ENCODE measurements at regions of chr10 and their contacts with region 1.

Region 1: DNA sequence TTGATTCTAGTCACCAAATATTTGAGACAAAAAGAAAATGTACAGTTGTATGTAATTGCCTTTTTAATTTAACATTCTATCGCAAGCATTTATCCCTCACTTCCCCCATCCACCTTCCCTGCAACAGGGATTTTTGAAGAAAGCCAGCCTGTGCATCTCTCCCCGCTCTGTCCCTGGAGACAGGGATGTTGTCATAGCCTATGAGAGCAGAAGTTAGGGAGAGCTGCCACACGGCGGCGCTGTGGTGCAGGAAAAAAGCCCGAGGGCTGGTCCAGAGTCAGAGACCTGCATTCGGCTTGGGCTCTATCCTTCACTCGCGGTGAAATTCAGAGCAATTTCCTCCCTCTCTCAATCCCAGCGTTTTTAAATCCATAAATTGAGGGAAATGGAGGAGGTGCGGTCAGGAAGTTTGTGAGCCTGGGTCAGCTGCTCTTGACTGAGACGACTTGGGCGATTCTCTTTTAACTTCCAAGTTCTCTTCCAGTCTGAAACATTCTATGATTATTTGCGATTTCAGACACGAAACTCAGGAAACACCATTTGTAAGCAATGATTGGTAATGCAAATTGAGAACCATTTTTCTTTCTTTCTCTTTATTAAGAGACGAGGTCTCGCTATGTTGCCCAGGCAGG is 17.5 kb downstream of the HKDC1 start:
- DNase-seq: peak; percentile 78
- H3K4me3 Mint-ChIP-seq: no peak overlapping the region
- H3K27ac Mint-ChIP-seq: no peak overlapping the region
- H3K4me1 Mint-ChIP-seq: peaks cover 15% of the 10 kb centered on the region
- H3K27me3 Mint-ChIP-seq: peaks cover 2% of the 10 kb centered on the region

Region 2: GRCh38 chr10:69101451-69102095 is 136.1 kb before region 1 on chr10:
- intact Hi-C with region 1: no loop called
- DNase-seq: no peak
- H3K4me3 Mint-ChIP-seq: peak overlapping the region; percentile 23
- H3K27ac Mint-ChIP-seq: peak overlapping the region; percentile 40
- H3K4me1 Mint-ChIP-seq: peaks cover 31% of the 10 kb centered on the region
- H3K27me3 Mint-ChIP-seq: no peaks in the 10 kb centered on the region

Region 3: DNA sequence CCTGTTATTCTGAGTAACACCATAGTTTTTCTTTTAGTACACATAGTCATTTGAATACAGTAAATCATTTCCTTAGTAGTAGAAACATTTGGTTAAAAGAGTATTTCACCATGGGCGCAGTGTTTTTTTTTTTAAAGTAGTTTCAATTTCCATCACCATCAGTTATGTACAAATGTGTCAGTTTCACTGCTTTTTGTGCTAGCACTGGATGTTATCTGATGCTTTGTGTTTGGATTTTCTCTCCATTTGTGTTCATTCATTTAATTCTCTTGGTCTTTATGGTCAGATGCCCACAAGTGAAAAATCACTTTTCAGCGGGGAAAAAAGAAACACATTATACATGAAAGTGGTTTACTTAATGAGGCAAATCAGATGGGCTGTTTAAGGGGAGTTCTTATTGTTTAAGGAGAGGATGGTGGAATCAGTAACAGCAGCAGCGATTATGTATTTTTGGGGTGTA is 24.7 kb after region 1 on chr10:
- intact Hi-C with region 1: loop called (anchors 1 kb)
- DNase-seq: no peak
- H3K4me3 Mint-ChIP-seq: peak overlapping the region; percentile 3
- H3K27ac Mint-ChIP-seq: peak overlapping the region; percentile 32
- H3K4me1 Mint-ChIP-seq: peaks cover 22% of the 10 kb centered on the region
- H3K27me3 Mint-ChIP-seq: peaks cover 7% of the 10 kb centered on the region

Region 4: DNA sequence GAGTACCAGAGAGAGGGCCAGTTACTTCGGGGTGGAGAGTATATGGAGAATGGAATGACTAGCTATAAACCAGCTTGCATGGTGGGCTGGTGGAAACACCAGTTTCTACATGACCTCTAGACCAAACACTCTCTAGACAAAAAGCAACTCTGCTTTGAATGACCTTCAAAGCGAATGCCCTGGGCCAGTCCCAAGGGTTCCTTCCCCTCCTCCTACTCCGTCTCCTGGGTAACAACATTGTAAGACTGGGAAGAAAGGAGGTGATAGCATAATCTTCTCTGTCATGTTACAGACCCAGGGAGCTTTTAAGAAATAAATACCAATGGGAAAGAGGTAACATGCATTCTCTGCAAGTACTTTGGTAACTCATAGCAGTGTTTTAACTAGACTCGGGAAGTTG is 48.1 kb after region 1 on chr10:
- intact Hi-C with region 1: loop called (anchors 5 kb)
- DNase-seq: no peak
- H3K4me3 Mint-ChIP-seq: no peak overlapping the region
- H3K27ac Mint-ChIP-seq: no peak overlapping the region
- H3K4me1 Mint-ChIP-seq: no peaks in the 10 kb centered on the region
- H3K27me3 Mint-ChIP-seq: peaks cover 7% of the 10 kb centered on the region